Right ventricle myocardium inferior (tissue), 1 donor: ENCODE measurements at regions of chr5 and their contacts with region 1.

Region 1: DNA sequence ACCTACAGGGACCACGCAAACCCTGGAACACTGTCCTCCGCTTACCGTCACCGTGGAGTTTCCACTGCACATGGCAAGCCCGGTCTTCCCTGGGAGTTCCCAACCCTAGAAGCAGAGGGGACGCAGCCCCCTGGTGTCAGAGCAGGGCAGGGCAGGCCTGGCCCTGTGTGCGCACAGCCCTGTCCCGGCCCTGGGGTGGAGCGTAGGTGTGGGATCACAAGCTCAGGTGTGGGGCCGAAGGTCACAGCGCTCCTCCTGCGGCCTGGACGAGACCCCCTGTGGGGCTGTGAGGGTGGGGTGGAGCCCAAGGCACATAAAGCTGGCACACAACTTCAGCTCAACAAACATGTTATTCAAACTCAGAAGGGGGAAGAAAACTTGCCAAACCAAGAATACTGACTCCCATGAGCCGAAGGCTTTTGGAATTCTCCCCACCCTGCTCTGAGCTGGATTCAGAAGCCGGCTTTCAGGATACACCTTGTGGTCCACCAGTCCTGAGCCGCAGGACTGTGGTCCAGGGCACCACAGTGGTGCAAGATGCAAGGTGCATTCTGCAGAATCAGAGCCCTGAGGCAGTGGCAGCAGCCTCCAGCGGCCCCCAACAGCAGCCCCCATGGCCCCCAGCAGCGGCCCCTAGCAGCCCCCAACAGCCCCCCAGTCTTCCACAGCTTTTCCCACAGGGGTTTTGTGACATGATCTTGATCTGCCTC is 11.8 kb upstream of the EXOC3 start:
- DNase-seq: no peak
- ATAC-seq: peak; percentile 74

Region 2: DNA sequence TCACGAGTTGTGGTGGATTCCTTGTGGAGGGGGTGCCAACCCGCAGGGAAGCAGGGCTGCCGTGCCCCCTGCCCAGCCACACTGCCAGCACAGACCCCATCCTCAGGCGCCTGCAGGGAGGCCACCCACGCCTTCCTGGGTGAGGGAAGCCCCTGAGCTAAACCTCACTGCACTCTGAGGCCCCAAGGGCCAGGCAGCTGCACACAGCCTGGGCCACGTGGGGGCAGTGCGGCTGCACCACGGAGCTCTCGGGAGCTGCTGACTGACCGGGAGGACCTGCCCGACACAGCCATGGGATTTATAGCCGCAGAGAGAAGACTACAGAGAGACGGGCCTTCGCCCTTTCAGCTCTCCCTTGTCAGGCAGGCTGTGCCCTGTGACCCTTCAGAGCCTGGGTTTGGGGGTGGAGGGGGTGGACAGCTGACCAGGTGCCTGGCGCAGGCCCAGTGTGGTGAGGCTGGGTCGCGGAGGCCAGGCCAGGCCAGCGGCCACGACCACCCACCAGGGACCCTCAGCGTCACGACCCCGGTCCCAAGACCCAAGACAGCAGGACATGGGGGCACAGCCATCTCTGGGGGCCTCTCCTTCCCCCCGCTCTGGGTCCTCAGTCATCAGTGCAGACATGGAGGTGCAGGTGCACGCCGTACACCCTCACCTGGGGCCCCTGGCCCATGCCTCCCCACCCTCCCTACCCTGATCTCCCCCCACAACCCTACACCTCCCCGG is 113.9 kb before region 1 on chr5:
- intact Hi-C with region 1: loop called (anchors 10 kb)
- DNase-seq: no peak
- ATAC-seq: peak; percentile 47

Region 3: GRCh38 chr5:386432-387341 is 44.5 kb before region 1 on chr5:
- intact Hi-C with region 1: no loop called
- DNase-seq: peak; percentile 51
- ATAC-seq: no peak